Activated CD8-positive, alpha-beta T cell treated with anti-CD3 and anti-CD28 coated beads for 36 hours (primary cell): ENCODE measurements at regions of chr3 and their contacts with region 1.

Region 1: GRCh38 chr3:187319699-187320302 is 28.3 kb upstream of the MASP1 start:
- DNase-seq: peak; percentile 83
- ATAC-seq: peak; percentile 94
- H3K4me3 Mint-ChIP-seq: no peak overlapping the region
- H3K27ac Mint-ChIP-seq: no peak overlapping the region
- H3K4me1 Mint-ChIP-seq: peaks cover 6% of the 10 kb centered on the region
- H3K27me3 Mint-ChIP-seq: peaks cover 30% of the 10 kb centered on the region
- CTCF ChIP-seq: peak; percentile 81

Region 2: DNA sequence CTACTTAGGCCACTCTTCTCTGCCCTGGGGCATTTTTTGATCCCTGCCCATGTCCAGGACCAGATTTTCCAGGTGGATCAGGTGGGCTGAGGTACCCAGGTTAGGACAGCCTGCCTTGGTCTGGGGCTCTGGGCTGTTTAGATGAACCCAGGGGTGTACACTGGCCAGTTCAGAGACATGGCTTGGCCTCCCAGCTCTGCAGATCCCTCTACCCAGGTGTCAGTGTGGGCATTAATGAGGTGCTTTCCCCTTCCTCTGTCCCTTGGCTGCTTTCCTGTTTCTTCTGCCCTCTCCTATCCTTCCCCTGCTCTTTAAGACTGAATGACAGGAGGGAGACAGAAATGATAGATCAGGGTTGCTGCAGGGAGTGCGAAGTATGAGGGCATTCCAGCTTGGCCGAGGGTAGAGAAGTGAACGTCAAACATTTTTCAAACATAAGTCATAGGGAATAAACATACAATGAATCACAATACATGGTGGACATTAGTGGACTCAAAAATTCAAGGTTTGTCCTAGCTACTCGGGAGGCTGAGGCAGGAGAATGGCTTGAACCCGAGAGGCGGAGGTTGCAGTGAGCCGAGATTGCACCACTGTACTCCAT is 92.0 kb before region 1 on chr3:
- CTCF ChIA-PET with region 1: interaction called, 14 read pairs
- POLR2A ChIA-PET with region 1: no interaction called
- intact Hi-C with region 1: loop called (anchors 5 kb)
- DNase-seq: no peak
- ATAC-seq: no peak
- H3K4me3 Mint-ChIP-seq: no peak overlapping the region
- H3K27ac Mint-ChIP-seq: no peak overlapping the region
- H3K4me1 Mint-ChIP-seq: no peaks in the 10 kb centered on the region
- H3K27me3 Mint-ChIP-seq: peaks cover 5% of the 10 kb centered on the region
- CTCF ChIP-seq: no peak

Region 3: DNA sequence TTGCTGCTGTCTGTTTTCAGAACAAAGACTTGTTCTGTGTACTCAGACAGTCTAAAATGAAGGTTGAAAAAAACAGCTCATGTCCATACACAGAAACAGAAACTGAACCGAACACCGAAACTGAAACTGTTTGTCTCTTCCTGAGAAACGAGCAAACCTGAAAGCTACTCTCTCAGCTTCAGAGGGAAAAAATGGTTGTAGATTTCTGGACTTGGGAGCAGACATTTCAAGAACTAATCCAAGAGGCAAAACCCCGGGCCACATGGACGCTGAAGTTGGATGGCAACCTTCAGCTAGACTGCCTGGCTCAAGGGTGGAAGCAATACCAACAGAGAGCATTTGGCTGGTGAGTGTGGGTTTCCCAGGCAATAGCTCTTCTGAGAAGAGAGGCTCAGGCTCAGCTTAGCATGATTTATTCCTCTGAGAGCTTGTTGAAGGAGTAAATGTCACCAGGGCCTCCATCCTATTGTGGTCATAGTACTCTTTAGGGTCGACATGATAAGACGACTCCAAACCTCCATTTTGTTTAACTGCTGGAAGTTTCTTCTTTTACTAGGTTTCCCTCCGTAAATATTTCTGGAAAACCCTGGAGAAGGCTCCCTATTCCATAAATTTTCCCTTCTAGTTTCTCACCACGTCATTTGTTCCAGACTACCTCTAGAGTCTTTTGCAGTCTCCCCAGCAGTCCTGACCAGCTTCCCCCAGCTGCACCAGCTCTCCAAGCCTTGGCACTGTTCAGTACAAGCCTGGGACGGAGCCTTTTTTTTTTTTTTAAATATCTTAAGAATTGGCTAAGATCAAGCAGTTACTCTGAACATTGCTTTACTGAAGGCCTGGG is 48.7 kb after region 1 on chr3 and contains the start of gene RTP4:
- CTCF ChIA-PET with region 1: interaction called, 38 read pairs
- POLR2A ChIA-PET with region 1: interaction called, 3 read pairs
- intact Hi-C with region 1: no loop called
- DNase-seq: peak; percentile 50
- ATAC-seq: peak; percentile 88
- H3K4me3 Mint-ChIP-seq: peak within 1 kb of the TSS; percentile 89
- H3K27ac Mint-ChIP-seq: peak within 1 kb of the TSS; percentile 98
- H3K4me1 Mint-ChIP-seq: peaks cover 21% of the 10 kb centered on the region
- H3K27me3 Mint-ChIP-seq: no peaks in the 10 kb centered on the region
- CTCF ChIP-seq: no peak
- total RNA-seq, gene RTP4: 3.4 to 3.6 TPM

Region 4: DNA sequence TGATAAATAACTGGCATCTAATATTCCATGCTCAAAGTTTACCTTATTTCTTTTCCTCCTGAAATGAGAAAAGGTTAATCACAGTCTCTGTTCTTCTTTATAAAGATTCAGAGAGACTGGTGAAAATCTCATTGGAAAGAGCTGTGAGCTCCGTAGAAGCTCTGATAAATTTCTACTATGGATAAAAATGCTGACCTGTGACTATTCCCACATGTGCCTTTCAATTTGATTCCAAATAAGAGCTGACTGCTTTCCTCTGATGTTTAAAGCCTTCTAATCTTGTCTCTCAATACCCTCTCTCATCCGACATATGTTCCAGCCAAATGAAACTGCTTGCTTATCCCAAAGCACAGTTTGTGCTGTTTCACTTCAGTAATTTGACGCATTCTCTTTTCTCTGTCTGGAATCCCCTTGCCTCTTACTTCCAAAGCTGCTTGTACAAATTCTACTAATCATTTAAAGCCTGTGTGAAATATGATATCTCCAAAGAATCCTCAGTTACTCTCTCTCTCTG is 178.5 kb after region 1 on chr3:
- CTCF ChIA-PET with region 1: interaction called, 13 read pairs
- POLR2A ChIA-PET with region 1: no interaction called
- intact Hi-C with region 1: no loop called
- DNase-seq: no peak
- ATAC-seq: no peak
- H3K4me3 Mint-ChIP-seq: no peak overlapping the region
- H3K27ac Mint-ChIP-seq: no peak overlapping the region
- H3K4me1 Mint-ChIP-seq: no peaks in the 10 kb centered on the region
- H3K27me3 Mint-ChIP-seq: peaks cover 9% of the 10 kb centered on the region
- CTCF ChIP-seq: no peak

Region 5: GRCh38 chr3:187662848-187663409 is 343.1 kb after region 1 on chr3:
- CTCF ChIA-PET with region 1: interaction called, 28 read pairs
- POLR2A ChIA-PET with region 1: no interaction called
- intact Hi-C with region 1: no loop called
- DNase-seq: no peak
- ATAC-seq: no peak
- H3K4me3 Mint-ChIP-seq: no peak overlapping the region
- H3K27ac Mint-ChIP-seq: no peak overlapping the region
- H3K4me1 Mint-ChIP-seq: peaks cover 7% of the 10 kb centered on the region
- H3K27me3 Mint-ChIP-seq: peaks cover 25% of the 10 kb centered on the region
- CTCF ChIP-seq: no peak

Region 6: DNA sequence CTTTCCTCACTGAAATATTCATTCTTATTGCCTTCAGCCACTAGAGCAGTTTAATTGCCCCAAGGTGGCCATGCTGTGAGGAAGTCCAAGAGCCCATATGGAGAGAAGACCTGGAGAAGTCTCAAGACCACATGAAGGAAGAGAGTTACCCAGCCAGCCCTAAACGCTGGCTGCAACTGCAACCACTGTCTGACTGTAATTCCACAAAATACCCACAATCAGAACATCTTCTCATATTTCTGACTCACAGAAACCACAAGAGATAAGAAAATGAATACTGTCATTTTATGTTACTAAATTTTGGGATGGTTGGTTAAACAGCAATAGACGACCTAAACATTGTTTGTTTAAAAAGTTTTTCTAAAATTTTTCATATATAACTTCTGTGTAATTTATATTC is 365.1 kb after region 1 on chr3:
- CTCF ChIA-PET with region 1: interaction called, 372 read pairs
- POLR2A ChIA-PET with region 1: no interaction called
- intact Hi-C with region 1: no loop called
- DNase-seq: no peak
- ATAC-seq: peak; percentile 45
- H3K4me3 Mint-ChIP-seq: no peak overlapping the region
- H3K27ac Mint-ChIP-seq: no peak overlapping the region
- H3K4me1 Mint-ChIP-seq: peaks cover 7% of the 10 kb centered on the region
- H3K27me3 Mint-ChIP-seq: peaks cover 17% of the 10 kb centered on the region
- CTCF ChIP-seq: no peak